ENCODE measurements at regions of chr9 and their contacts with region 1.

Region 1: GRCh38 chr9:77819657-77820056 is 171.5 kb upstream of the GNA14 start:
- DNase-seq: no peak
- H3K4me3 ChIP-seq: no peak overlapping the region
- H3K4me3 Mint-ChIP-seq: no peak overlapping the region
- H3K27ac ChIP-seq: no peak overlapping the region
- H3K27ac Mint-ChIP-seq: no peak overlapping the region
- H3K4me1 ChIP-seq: no peaks in the 10 kb centered on the region
- H3K4me1 Mint-ChIP-seq: peaks cover 2 to 24% (median 18%) of the 10 kb centered on the region in 3 donors
- H3K27me3 ChIP-seq: no peaks in the 10 kb centered on the region
- H3K27me3 Mint-ChIP-seq: no peaks in the 10 kb centered on the region

Region 2: GRCh38 chr9:77864211-77864889 is 44.7 kb after region 1 on chr9:
- CTCF ChIA-PET with region 1: no interaction called
- POLR2A ChIA-PET with region 1: interaction called, 11 read pairs
- DNase-seq: no peak
- H3K4me3 ChIP-seq: no peak overlapping the region
- H3K4me3 Mint-ChIP-seq: no peak overlapping the region
- H3K27ac ChIP-seq: no peak overlapping the region
- H3K27ac Mint-ChIP-seq: peak overlapping the region in 1 of 8 donors; percentile 24
- H3K4me1 ChIP-seq: no peaks in the 10 kb centered on the region
- H3K4me1 Mint-ChIP-seq: peaks cover 0 to 4% (median 0%) of the 10 kb centered on the region in 3 donors
- H3K27me3 ChIP-seq: no peaks in the 10 kb centered on the region
- H3K27me3 Mint-ChIP-seq: peaks cover 0 to 6% of the 10 kb centered on the region in 2 donors

Measured in CD8-positive, alpha-beta memory T cell (primary cell).